MCF 10A (cell line): ENCODE measurements at regions of chr7 and their contacts with region 1.

Region 1: DNA sequence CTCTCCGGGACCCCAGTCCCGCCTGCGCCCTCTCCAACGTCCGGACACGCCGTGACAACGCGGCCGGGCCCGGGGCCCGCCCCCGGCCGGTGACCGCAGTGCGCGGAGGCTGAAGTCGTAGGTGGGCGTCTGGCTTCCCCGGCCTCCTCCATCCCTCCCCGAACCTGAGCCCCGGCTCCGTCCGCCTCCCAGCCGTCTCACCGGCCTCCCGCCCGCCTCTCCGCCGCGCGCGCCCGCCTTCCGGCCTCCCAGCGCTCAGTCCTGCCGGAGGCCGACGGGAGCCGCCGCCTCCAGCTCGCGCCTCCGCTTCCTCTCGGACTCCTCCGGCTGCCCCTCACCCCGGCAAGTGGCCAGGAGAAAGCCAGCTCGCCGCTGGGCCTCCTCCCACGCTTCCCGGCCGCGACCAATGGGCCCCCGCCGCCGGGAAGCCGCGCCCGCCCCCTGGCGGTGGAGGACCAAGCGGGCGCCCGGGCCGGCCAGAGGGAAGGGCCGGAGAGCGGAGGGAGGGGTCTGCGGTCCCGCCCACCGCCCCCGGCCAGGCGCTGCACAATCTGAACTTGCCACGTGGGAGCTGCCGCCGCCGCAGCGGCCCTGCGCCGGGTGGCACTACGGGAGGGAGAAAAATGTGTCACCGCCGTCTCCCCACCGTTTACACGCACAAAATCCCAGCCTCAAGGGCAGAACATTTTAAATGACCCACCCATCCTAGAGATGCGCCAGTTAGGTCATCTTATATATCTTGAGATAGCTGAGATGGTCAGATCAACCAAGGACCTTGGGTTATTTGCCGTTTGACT is at the start of gene FAM3C:
- DNase-seq: peak; percentile 95
- H3K4me3 Mint-ChIP-seq: peak within 1 kb of the TSS; percentile 80
- H3K27ac Mint-ChIP-seq: peak within 1 kb of the TSS; percentile 23
- H3K4me1 Mint-ChIP-seq: peaks cover 17% of the 10 kb centered on the region
- H3K27me3 Mint-ChIP-seq: no peaks in the 10 kb centered on the region
- CTCF ChIP-seq: peak; percentile 82
- total RNA-seq, gene FAM3C: 56.5 and 64.1 TPM in 2 replicates

Region 2: DNA sequence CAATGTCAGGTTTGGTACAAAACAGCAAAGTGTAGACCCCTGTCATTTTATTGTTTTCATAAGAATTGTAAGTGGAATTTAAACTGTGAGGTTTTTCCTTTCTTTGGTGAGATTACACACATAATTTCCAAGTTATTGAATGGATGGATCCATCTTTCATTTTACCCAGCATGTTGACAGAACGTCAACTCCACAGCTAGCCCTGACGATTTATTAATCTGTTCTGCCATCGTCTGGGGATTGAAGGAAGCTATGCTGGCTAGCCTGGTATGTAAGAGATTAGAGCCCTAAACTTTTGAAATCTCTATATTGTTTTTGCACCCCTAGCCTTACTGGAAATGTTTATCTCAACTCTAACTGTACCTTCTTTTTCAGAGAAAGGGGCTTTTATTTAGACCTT is 58.8 kb before region 1 on chr7:
- CTCF ChIA-PET with region 1: no interaction called
- POLR2A ChIA-PET with region 1: no interaction called
- intact Hi-C with region 1: no loop called
- DNase-seq: peak; percentile 31
- H3K4me3 Mint-ChIP-seq: no peak overlapping the region
- H3K27ac Mint-ChIP-seq: no peak overlapping the region
- H3K4me1 Mint-ChIP-seq: no peaks in the 10 kb centered on the region
- H3K27me3 Mint-ChIP-seq: peaks cover 30% of the 10 kb centered on the region
- CTCF ChIP-seq: no peak

Region 3: GRCh38 chr7:121385800-121386179 is 10.4 kb before region 1 on chr7:
- CTCF ChIA-PET with region 1: interaction called, 32 read pairs
- POLR2A ChIA-PET with region 1: interaction called, 26 read pairs
- intact Hi-C with region 1: no loop called
- DNase-seq: no peak
- H3K4me3 Mint-ChIP-seq: no peak overlapping the region
- H3K27ac Mint-ChIP-seq: no peak overlapping the region
- H3K4me1 Mint-ChIP-seq: peaks cover 31% of the 10 kb centered on the region
- H3K27me3 Mint-ChIP-seq: no peaks in the 10 kb centered on the region
- CTCF ChIP-seq: no peak

Region 4: GRCh38 chr7:121410829-121411596 is 14.9 kb after region 1 on chr7:
- CTCF ChIA-PET with region 1: interaction called, 10 read pairs
- POLR2A ChIA-PET with region 1: interaction called, 8 read pairs
- intact Hi-C with region 1: no loop called
- DNase-seq: no peak
- H3K4me3 Mint-ChIP-seq: no peak overlapping the region
- H3K27ac Mint-ChIP-seq: no peak overlapping the region
- H3K4me1 Mint-ChIP-seq: no peaks in the 10 kb centered on the region
- H3K27me3 Mint-ChIP-seq: no peaks in the 10 kb centered on the region
- CTCF ChIP-seq: no peak

Region 5: DNA sequence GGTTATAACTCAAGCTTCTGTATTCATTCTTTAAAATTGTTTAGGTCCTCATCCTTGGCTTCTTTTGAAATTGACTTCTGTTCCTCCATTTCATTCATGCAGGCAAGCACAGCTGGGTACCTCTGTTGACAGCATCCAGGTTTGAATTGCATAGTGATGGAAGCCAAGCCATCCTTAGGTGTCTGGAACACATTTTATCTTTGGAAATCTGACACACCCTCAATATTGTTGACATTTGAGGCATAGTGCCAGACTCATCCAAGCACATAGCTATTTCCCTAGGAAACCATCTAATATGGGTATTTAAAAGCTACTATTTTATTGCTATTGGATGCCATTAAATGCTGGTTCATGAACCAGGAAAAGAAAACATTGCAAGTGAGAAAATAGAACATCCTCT is 334.7 kb after region 1 on chr7:
- CTCF ChIA-PET with region 1: no interaction called
- POLR2A ChIA-PET with region 1: no interaction called
- intact Hi-C with region 1: no loop called
- DNase-seq: peak; percentile 26
- H3K4me3 Mint-ChIP-seq: no peak overlapping the region
- H3K27ac Mint-ChIP-seq: peak overlapping the region; percentile 31
- H3K4me1 Mint-ChIP-seq: no peaks in the 10 kb centered on the region
- H3K27me3 Mint-ChIP-seq: no peaks in the 10 kb centered on the region
- CTCF ChIP-seq: no peak

Region 6: GRCh38 chr7:121847041-121847440 is 450.9 kb after region 1 on chr7:
- CTCF ChIA-PET with region 1: no interaction called
- POLR2A ChIA-PET with region 1: no interaction called
- intact Hi-C with region 1: no loop called
- DNase-seq: no peak
- H3K4me3 Mint-ChIP-seq: no peak overlapping the region
- H3K27ac Mint-ChIP-seq: no peak overlapping the region
- H3K4me1 Mint-ChIP-seq: no peaks in the 10 kb centered on the region
- H3K27me3 Mint-ChIP-seq: no peaks in the 10 kb centered on the region
- CTCF ChIP-seq: no peak

Region 7: GRCh38 chr7:122212754-122213153 is 816.6 kb after region 1 on chr7:
- CTCF ChIA-PET with region 1: no interaction called
- POLR2A ChIA-PET with region 1: no interaction called
- intact Hi-C with region 1: no loop called
- DNase-seq: no peak
- H3K4me3 Mint-ChIP-seq: no peak overlapping the region
- H3K27ac Mint-ChIP-seq: no peak overlapping the region
- H3K4me1 Mint-ChIP-seq: peaks cover 6% of the 10 kb centered on the region
- H3K27me3 Mint-ChIP-seq: peaks cover 51% of the 10 kb centered on the region
- CTCF ChIP-seq: no peak